BJ (cell line): ENCODE measurements at regions of chr1 and their contacts with region 1.

Region 1: DNA sequence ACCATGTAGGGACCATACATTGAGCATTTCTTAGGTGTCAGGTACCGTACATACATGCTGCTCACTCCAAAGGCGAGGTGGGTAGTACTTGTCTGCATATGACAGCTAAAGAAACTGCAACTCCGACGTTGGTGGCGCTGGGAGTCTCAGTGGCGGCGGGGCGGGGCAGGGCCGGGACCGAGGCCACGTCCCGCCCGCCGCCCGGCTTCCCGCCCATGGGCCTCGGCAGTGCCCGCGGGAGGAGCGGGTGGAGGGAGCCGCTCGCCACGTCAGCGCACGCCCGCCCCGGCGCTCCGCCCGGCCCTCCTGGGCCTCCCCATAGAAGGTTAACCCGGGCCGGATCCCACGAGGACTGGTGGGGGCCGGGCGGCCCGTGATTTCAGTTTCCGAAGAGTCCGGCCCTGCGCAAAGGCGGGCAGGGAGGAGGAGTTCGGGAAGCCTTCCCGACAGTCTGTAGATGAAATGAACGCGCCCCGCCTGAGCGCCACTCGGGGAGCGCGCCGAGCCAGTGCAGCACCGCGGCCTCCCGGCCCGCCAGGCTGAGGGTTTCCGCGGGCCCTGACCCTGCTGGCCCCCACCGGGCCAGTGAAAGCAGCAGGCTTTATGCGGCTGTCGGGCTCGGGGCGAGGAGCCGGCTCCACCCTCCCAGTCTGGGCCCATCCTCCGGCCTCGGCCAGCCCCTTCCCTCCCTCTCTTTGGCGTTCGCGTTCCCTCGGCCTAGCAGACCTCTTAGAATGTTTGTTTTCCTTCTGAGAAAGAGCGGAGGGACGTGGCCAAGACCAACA is 119.9 kb upstream of the JUN start:
- DNase-seq: peak; percentile 63
- H3K4me3 ChIP-seq: peak overlapping the region; percentile 50
- H3K27me3 ChIP-seq: no peaks in the 10 kb centered on the region
- CTCF ChIP-seq: no peak

Region 2: GRCh38 chr1:58888833-58889232 is 14.9 kb before region 1 on chr1:
- CTCF ChIA-PET with region 1: interaction called, 12 read pairs
- POLR2A ChIA-PET with region 1: no interaction called
- DNase-seq: no peak
- H3K4me3 ChIP-seq: no peak overlapping the region
- H3K27me3 ChIP-seq: no peaks in the 10 kb centered on the region
- CTCF ChIP-seq: no peak

Region 3: GRCh38 chr1:58932859-58933598 is 29.3 kb after region 1 on chr1:
- CTCF ChIA-PET with region 1: no interaction called
- POLR2A ChIA-PET with region 1: no interaction called
- DNase-seq: no peak
- H3K4me3 ChIP-seq: no peak overlapping the region
- H3K27me3 ChIP-seq: no peaks in the 10 kb centered on the region
- CTCF ChIP-seq: no peak